AG04449 (cell line): ENCODE measurements at regions of chr10 and their contacts with region 1.

Region 1: GRCh38 chr10:70549962-70550458 is 52.5 kb downstream of the PRF1 start:
- DNase-seq: no peak
- H3K4me3 ChIP-seq: no peak overlapping the region
- CTCF ChIP-seq: peak; percentile 83

Region 2: DNA sequence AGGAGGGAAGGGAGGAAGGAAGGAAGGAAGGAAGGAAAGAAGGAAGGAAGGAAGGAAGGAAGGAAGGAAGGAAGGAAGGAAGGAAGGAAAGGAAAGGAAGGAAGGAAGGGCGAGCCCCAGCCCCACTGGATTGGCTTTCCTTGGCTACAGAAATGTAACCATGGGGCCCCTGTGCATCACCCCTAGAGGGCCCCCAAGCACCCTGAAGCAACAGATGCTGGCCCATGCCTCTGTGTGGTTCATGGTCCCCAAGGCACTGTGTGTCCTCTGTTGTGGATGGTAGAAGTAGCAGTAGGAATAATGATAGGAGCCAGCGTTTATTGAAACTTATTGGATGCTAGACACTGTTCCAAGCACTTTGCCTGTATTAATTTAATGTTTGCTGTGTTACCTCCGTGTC is 613.9 kb before region 1 on chr10:
- CTCF ChIA-PET with region 1: no interaction called
- POLR2A ChIA-PET with region 1: no interaction called
- DNase-seq: no peak
- H3K4me3 ChIP-seq: no peak overlapping the region
- CTCF ChIP-seq: peak; percentile 3

Region 3: DNA sequence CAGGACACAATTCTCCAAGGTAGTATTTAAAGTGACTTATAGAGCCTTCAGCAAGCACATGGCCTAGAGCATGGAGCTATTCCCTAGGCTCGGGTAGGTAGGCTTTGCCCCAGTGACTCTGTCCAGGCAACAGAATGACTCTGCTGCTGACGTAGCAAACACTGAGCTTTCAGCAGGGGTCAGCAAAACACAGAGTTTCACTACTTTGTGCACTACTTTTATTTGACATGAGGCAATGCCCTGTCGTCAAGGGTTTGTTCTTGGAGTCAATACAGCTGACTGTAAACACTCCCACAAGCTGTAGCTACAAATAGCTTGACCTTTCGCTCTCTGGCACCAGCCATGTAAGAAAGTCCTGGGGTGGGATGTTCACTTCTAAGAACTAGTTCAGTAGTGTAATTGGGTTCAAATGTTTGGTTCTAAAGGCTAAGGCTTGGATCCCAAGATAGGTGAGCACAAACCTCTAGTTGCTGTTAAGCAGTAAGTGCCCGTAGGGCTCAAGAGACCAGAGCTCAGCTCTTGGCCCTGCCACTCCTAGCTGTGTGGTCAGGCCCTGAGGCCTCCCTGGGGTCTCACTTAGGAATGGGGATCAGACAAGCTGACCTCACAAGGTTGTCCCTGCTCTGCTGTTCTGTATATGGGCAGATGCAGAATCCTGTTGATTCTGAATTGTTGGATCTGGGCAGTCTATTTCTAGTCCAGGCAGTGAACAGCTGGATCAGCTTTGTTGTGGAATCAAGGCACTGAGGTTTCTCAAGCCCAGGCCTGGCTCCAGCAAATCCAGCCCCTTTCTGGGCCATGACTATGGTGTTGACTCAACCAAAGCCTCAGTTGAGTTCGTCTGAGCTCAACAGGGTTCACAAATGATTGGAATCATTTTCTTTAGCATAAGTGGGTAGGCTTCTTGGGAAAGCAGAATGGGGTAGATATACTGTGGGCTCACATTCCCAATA is 119.2 kb before region 1 on chr10:
- CTCF ChIA-PET with region 1: no interaction called
- POLR2A ChIA-PET with region 1: no interaction called
- DNase-seq: no peak
- H3K4me3 ChIP-seq: no peak overlapping the region
- CTCF ChIP-seq: no peak

Region 4: DNA sequence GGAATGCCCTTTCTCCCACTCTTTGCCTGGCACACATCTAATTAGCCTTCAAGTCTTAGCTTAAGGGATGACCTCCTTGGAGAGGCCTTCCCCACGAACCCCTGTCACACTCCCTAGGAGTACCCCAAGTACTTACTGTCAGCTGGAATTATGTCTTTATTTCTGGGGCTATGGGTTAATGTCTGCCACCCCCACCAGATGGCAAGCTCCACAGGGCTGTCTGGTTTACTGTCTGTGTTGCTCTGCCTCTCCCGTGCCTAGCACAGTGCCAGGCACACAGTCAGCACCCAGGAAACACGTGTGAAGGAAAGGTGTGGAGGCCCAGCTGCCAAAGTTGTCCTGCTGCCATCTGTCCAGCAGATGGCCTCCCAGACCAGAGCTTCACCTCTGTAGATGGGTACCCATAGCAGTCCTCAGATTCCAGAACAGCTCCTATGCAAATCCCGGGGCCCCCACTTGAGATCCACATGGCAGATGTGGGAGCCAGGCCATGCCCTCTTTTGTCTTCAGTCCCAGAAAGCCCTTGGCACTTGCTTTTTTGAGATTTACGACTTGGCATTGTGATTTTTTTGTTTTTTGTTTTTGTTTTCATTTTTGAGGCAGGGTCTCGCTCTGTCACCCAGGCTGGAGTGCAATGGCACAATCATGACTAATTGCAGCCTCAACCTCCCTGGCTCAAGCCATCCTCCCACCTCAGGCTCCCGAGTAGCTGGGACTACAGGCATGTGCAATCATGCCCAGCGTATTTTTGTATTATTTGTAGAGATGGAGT is 88.6 kb before region 1 on chr10:
- CTCF ChIA-PET with region 1: interaction called, 180 read pairs
- POLR2A ChIA-PET with region 1: no interaction called
- DNase-seq: peak; percentile 14
- H3K4me3 ChIP-seq: no peak overlapping the region
- CTCF ChIP-seq: peak; percentile 87

Region 5: DNA sequence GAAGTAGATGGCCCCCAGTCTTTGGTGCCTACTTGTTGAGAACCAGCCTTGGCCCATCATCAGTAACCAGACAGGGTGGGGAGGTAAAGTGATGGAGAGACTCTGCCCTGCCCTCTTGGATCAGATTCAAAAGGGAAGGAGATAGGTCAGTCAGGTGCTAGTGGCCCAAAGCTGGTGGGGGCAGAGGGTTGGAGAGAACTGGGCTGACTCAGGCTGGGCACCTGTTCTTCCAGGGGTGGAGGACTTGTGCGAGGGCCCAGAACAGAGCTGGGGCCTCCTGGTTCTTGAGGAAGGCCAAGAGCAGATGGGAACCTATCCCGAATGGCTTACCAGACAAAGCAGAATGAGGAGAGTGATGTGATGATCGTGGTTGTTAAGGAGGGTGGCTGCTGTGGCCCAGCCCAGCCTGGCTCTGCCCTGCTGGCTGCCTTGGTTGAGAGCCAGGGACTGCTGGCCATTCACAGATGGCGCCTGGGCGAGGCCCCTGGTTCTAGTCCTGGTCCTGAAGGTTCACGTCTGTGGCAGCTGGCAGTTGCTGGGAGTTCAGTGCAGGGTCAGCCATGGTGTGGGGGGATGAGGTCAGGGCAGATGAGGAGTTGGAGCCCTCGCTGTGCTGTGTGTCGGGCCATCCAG is 34.9 kb before region 1 on chr10:
- CTCF ChIA-PET with region 1: no interaction called
- POLR2A ChIA-PET with region 1: no interaction called
- DNase-seq: no peak
- H3K4me3 ChIP-seq: no peak overlapping the region
- CTCF ChIP-seq: no peak

Region 6: GRCh38 chr10:70575874-70576802 is 26.1 kb after region 1 on chr10:
- CTCF ChIA-PET with region 1: interaction called, 14 read pairs
- POLR2A ChIA-PET with region 1: no interaction called
- DNase-seq: no peak
- H3K4me3 ChIP-seq: no peak overlapping the region
- CTCF ChIP-seq: no peak

Region 7: GRCh38 chr10:70758757-70759514 is 208.9 kb after region 1 on chr10:
- CTCF ChIA-PET with region 1: interaction called, 496 read pairs
- POLR2A ChIA-PET with region 1: no interaction called
- DNase-seq: peak; percentile 16
- H3K4me3 ChIP-seq: no peak overlapping the region
- CTCF ChIP-seq: peak; percentile 74

Region 8: DNA sequence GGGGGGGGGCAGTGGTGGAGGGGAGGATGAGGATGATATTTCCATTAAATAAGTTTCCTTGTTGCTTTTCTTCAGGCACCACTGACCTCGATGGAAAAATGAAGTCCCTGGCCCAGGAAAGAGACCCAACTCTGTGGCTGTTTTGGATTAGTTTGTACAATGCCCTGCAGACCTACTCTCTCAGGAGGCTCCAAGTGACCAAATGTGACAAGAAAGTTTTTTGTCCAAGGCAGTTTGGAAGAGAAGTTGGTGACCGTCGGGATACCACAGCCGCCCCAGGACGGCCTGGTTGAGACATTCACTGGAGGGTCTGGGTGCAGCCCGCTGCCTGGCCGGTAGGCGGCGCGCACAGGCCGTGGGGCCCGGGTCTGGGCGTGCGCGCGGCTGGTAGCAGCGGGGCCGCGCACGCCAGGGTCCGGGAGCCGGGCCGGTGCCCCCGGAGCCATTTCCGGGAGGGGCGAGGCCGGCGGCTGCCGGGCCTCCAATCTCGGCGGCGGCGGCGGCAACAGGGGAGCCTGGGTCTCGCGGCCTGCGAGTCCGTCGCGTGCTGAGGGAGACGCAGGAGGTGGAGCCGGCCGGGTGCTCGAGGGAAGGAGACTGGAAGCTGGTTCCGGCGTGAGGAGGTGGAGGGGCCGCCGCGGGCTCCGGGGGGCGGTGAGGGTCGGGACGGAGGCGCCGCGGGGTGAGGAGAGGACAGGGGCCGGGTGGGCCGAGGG is 265.7 kb after region 1 on chr10 and contains the start of gene SGPL1:
- CTCF ChIA-PET with region 1: interaction called, 70 read pairs
- POLR2A ChIA-PET with region 1: interaction called, 6 read pairs
- DNase-seq: no peak
- H3K4me3 ChIP-seq: peak within 1 kb of the TSS; percentile 91
- CTCF ChIP-seq: peak; percentile 89

Region 9: DNA sequence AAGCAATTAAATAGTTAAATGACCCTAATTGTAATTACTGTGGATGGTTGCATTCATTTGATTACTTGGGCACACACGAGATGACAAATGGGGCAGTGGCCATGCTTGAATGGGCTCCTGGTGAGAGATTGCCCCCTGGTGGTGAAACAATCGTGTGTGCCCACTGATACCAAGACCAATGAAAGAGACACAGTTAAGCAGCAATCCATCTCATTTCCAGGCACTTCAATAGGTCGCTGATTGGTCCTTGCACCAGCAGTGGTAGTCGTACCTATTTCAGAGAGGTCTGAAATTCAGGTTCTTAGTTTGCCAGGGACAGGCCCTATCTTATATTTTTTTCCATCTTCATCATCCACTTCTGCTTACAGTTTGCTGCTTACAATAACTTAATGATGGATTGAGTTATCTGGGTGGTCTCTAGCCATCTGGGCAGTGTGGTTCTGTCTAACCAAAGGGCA is 330.1 kb after region 1 on chr10:
- CTCF ChIA-PET with region 1: interaction called, 115 read pairs
- POLR2A ChIA-PET with region 1: no interaction called
- DNase-seq: no peak
- H3K4me3 ChIP-seq: no peak overlapping the region
- CTCF ChIP-seq: peak; percentile 83